CD4-positive, alpha-beta T cell (primary cell): ENCODE measurements at regions of chr6 and their contacts with region 1.

Region 1: DNA sequence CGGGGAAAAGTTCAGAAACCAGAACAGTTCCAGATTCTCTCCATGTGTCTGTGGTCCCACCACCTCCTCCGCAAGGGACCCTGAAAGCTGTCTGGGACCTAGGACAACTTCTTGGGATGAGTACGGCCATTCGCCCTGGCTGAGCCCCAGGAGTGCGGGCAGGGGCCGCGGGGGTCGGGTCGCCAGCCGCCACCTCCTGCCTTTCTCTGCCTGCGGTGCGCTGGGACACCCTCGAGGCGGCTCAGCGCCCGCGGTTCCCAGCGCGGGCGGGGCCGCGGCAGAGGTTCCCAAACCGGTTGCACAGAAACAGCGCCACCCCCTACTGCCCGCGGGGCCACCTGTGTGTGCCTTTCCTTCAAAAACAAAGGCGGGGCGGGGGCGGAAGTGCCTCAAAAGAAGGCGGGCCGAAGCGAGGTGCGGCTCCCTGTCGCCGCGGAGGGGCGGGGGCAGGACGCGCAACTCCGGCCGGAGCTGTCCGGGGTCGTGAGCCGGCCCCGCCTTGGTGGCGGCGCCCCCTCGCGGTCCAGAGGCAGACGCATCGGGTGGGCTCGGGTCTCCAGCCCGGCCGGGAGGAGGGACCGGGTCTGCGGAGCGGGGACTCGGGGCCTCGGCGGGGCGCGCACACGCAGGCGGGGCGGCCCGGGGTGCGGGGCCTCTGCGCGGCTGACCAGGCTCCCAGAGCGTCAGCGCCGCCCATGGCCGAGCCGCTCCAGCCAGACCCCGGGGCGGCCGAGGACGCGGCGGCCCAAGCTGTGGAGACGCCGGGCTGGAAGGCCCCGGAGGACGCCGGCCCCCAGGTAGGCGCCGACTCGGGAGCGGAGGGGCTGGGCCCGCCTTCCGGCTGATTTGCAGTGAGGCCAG is at the start of gene HEBP2:
- DNase-seq: peak; percentile 77 to 97 (median 94)
- ATAC-seq: peak; percentile 93
- H3K4me3 ChIP-seq: peak within 1 kb of the TSS; percentile 91
- H3K4me3 Mint-ChIP-seq: peak within 1 kb of the TSS; percentile 87
- H3K27ac ChIP-seq: peak within 1 kb of the TSS; percentile 61 to 75
- H3K27ac Mint-ChIP-seq: peak within 1 kb of the TSS; percentile 86
- H3K4me1 ChIP-seq: peaks cover 27% of the 10 kb centered on the region
- H3K4me1 Mint-ChIP-seq: peaks cover 21% of the 10 kb centered on the region
- H3K27me3 ChIP-seq: no peaks in the 10 kb centered on the region
- H3K27me3 Mint-ChIP-seq: no peaks in the 10 kb centered on the region
- CTCF ChIP-seq: peak; percentile 48
- total RNA-seq, gene HEBP2: 31.8 to 32.9 TPM

Region 2: DNA sequence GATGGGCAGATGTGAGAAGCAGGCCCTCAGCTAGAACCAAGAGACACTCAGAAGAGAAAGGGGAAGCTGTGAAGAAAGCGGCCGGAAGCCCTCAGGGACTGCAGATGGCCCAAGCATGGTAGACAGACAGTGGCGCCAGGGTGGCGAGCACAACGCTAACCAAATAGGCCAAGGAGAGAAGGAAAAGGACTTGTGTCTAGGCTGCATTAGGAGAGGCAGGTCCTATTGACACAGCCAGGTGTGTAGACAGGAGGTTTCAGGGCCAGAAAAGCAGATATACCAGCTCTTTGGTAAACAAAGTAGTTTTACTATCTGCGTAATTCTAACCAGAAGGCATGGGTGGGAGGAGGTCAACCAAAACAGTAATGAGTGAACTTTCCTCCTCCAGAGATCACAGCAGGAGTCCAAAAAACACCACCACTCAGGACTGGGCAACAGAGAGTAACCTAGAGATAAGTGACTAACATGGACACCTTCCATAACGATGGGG is 1838.0 kb before region 1 on chr6:
- CTCF ChIA-PET with region 1: no interaction called
- POLR2A ChIA-PET with region 1: no interaction called
- intact Hi-C with region 1: no loop called
- DNase-seq: no peak
- ATAC-seq: no peak
- H3K4me3 ChIP-seq: no peak overlapping the region
- H3K4me3 Mint-ChIP-seq: no peak overlapping the region
- H3K27ac ChIP-seq: no peak overlapping the region
- H3K27ac Mint-ChIP-seq: no peak overlapping the region
- H3K4me1 ChIP-seq: no peaks in the 10 kb centered on the region
- H3K4me1 Mint-ChIP-seq: peaks cover 15% of the 10 kb centered on the region
- H3K27me3 ChIP-seq: no peaks in the 10 kb centered on the region
- H3K27me3 Mint-ChIP-seq: no peaks in the 10 kb centered on the region
- CTCF ChIP-seq: no peak

Region 3: DNA sequence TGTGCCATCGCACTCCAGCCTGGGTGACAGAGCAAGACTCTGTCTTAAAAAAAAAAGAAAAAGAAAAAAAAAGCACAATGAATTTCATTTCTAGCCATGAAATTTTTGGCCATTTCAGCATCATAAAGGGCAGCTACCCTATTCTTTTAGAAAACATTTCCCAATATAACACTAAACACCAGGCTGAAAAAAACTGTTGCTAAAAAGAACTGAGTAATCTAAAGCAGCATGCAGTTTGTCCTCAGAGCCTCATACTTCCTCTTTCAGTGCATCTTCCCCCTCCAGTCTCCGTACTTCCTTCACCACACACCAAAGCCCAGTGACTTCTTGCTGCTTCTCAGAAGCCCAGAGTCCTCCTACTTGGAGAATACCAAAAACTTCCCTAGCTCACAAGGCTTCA is 1179.2 kb before region 1 on chr6:
- CTCF ChIA-PET with region 1: no interaction called
- POLR2A ChIA-PET with region 1: no interaction called
- intact Hi-C with region 1: loop called in 1 of 2 experiments (anchors 10 kb)
- DNase-seq: peak in 4 of 14 experiments; percentile 18 to 70 (median 60)
- ATAC-seq: peak; percentile 57
- H3K4me3 ChIP-seq: no peak overlapping the region
- H3K4me3 Mint-ChIP-seq: peak overlapping the region; percentile 39
- H3K27ac ChIP-seq: no peak overlapping the region
- H3K27ac Mint-ChIP-seq: peak overlapping the region; percentile 2
- H3K4me1 ChIP-seq: peaks cover 45% of the 10 kb centered on the region
- H3K4me1 Mint-ChIP-seq: peaks cover 50% of the 10 kb centered on the region
- H3K27me3 ChIP-seq: no peaks in the 10 kb centered on the region
- H3K27me3 Mint-ChIP-seq: no peaks in the 10 kb centered on the region
- CTCF ChIP-seq: no peak

Region 4: DNA sequence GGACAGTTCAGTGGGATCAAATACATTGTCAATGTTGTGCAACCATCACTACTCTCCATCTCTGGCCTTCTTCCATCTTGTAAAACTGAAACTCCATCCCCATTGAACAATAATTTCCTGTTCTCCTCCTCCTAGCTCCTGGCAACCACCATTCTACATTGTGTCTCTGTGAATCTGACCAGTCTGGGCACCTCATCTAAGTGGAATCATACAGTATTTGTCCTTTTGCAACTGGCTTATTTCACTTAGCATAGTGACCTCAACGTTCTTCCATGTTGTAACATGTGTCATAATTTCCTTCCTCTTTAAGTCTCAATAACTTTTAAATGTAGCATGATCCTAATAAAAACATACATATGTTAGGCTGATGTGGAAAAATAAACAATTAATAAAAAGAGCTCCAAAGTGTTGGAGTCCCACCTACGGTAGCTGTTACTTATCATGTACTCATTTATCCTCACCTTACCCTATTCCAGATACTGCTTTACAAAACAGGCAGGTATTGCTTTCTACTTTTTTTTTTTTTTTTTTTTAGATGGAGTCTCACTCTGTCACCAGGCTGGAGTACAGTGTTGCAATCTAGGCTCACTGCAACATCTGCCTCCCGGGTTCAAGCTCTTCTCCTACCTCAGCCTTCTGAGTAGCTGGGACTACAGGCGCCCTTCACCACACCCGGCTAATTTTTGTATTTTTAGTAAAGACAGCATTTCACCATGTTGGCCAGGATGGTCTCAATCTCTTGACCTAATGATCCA is 445.0 kb before region 1 on chr6:
- CTCF ChIA-PET with region 1: no interaction called
- POLR2A ChIA-PET with region 1: no interaction called
- intact Hi-C with region 1: no loop called
- DNase-seq: peak in 2 of 14 experiments; percentile 40 to 48
- ATAC-seq: no peak
- H3K4me3 ChIP-seq: no peak overlapping the region
- H3K4me3 Mint-ChIP-seq: no peak overlapping the region
- H3K27ac ChIP-seq: no peak overlapping the region
- H3K27ac Mint-ChIP-seq: no peak overlapping the region
- H3K4me1 ChIP-seq: no peaks in the 10 kb centered on the region
- H3K4me1 Mint-ChIP-seq: peaks cover 5% of the 10 kb centered on the region
- H3K27me3 ChIP-seq: no peaks in the 10 kb centered on the region
- H3K27me3 Mint-ChIP-seq: no peaks in the 10 kb centered on the region
- CTCF ChIP-seq: no peak

Region 5: DNA sequence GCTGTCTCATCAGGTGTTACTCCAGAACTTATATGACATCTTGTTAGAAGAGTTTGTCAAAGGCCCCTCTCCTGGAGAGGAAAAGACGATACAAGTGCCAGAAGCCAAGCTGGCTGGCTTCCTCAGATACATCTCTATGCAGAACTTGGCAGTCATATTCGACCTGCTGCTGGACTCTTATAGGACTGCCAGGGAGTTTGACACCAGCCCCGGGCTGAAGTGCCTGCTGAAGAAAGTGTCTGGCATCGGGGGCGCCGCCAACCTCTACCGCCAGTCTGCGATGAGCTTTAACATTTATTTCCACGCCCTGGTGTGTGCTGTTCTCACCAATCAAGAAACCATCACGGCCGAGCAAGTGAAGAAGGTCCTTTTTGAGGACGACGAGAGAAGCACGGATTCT is 70.0 kb before region 1 on chr6:
- CTCF ChIA-PET with region 1: no interaction called
- POLR2A ChIA-PET with region 1: no interaction called
- intact Hi-C with region 1: no loop called
- DNase-seq: no peak
- ATAC-seq: no peak
- H3K4me3 ChIP-seq: no peak overlapping the region
- H3K4me3 Mint-ChIP-seq: no peak overlapping the region
- H3K27ac ChIP-seq: no peak overlapping the region
- H3K27ac Mint-ChIP-seq: no peak overlapping the region
- H3K4me1 ChIP-seq: no peaks in the 10 kb centered on the region
- H3K4me1 Mint-ChIP-seq: no peaks in the 10 kb centered on the region
- H3K27me3 ChIP-seq: no peaks in the 10 kb centered on the region
- H3K27me3 Mint-ChIP-seq: peaks cover 17% of the 10 kb centered on the region
- CTCF ChIP-seq: no peak

Region 6: DNA sequence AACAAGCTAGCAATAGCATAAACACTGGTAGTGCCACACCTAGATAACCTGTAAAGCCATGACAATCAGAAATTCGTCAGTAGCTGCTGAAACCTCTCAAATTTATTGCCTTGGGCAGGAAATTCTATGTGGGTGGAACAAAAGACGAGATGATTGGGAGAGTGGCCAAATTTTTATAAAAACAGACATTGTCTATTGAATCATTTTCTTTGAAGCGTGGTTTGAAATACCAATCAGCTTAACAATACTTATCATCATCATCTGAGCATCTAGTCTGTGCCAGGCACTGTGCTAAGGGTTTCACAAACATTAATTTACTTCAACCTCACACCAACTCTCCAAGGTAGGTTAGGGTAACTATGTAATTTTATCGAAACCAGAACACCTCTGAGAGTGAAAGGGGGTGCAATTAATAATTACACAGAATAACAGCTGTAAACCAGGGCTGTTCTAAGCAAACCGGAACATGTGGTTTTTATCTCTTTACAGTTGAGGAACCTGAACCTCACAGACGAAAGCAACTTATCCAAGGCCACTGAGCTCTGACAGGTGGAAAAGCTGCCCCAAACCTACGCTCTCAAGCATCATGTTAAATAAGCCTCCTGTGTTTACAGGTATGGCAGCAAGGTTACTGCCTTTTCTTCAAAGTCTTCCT is 51.8 kb after region 1 on chr6:
- CTCF ChIA-PET with region 1: no interaction called
- POLR2A ChIA-PET with region 1: interaction called, 28 read pairs
- intact Hi-C with region 1: loop called in 1 of 2 experiments (anchors 2 kb)
- DNase-seq: peak in 10 of 14 experiments; percentile 2 to 84 (median 26)
- ATAC-seq: peak; percentile 74
- H3K4me3 ChIP-seq: peak overlapping the region; percentile 44
- H3K4me3 Mint-ChIP-seq: peak overlapping the region; percentile 82
- H3K27ac ChIP-seq: peak overlapping the region; percentile 43 to 58
- H3K27ac Mint-ChIP-seq: peak overlapping the region; percentile 97
- H3K4me1 ChIP-seq: peaks cover 18% of the 10 kb centered on the region
- H3K4me1 Mint-ChIP-seq: peaks cover 32% of the 10 kb centered on the region
- H3K27me3 ChIP-seq: no peaks in the 10 kb centered on the region
- H3K27me3 Mint-ChIP-seq: no peaks in the 10 kb centered on the region
- CTCF ChIP-seq: no peak

Region 7: DNA sequence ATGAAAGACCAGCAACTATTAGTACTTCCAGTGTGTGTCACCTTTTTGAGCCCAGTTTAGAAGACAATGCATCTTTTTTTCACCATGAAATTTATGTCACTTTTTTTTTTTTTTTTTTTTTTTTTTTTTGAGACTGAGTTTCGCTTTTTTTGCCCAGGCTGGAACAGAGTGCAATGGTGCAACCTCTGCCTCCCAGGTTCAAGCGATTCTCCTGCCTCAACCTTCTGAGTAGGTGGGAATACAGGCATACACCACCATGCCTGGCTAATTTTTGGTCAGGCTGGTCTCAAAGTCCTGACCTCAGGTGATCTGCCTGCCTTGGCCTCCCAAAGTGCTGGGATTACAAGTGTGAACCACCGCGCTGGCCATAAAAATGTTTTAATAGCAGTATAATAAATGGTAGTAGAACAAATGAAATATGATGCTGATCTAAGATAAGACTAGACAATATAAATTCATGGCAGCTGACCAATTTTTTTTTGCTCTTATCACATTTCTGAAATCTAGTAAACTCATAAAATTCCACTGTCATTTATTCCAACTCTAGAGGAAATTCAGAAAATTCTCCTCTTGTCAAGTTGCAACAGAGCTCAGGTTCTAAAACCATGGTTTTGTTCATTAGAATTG is 74.0 kb after region 1 on chr6:
- CTCF ChIA-PET with region 1: no interaction called
- POLR2A ChIA-PET with region 1: no interaction called
- intact Hi-C with region 1: no loop called
- DNase-seq: no peak
- ATAC-seq: no peak
- H3K4me3 ChIP-seq: no peak overlapping the region
- H3K4me3 Mint-ChIP-seq: no peak overlapping the region
- H3K27ac ChIP-seq: no peak overlapping the region
- H3K27ac Mint-ChIP-seq: no peak overlapping the region
- H3K4me1 ChIP-seq: no peaks in the 10 kb centered on the region
- H3K4me1 Mint-ChIP-seq: no peaks in the 10 kb centered on the region
- H3K27me3 ChIP-seq: no peaks in the 10 kb centered on the region
- H3K27me3 Mint-ChIP-seq: no peaks in the 10 kb centered on the region
- CTCF ChIP-seq: no peak

Region 8: GRCh38 chr6:138773177-138774091 is 369.4 kb after region 1 on chr6 and contains the start of gene CCDC28A:
- CTCF ChIA-PET with region 1: no interaction called
- POLR2A ChIA-PET with region 1: interaction called, 8 read pairs
- intact Hi-C with region 1: loop called in 1 of 2 experiments (anchors 5 kb)
- DNase-seq: peak; percentile 87 to 97 (median 92)
- ATAC-seq: peak; percentile 84
- H3K4me3 ChIP-seq: peak within 1 kb of the TSS; percentile 85
- H3K4me3 Mint-ChIP-seq: peak within 1 kb of the TSS; percentile 98
- H3K27ac ChIP-seq: peak within 1 kb of the TSS; percentile 93 to 97
- H3K27ac Mint-ChIP-seq: peak within 1 kb of the TSS; percentile 98
- H3K4me1 ChIP-seq: peaks cover 11% of the 10 kb centered on the region
- H3K4me1 Mint-ChIP-seq: peaks cover 39% of the 10 kb centered on the region
- H3K27me3 ChIP-seq: no peaks in the 10 kb centered on the region
- H3K27me3 Mint-ChIP-seq: no peaks in the 10 kb centered on the region
- CTCF ChIP-seq: no peak
- total RNA-seq, gene CCDC28A: 36.9 to 37.2 TPM